ENCODE measurements at regions of chr2 and their contacts with region 1.

Region 1: DNA sequence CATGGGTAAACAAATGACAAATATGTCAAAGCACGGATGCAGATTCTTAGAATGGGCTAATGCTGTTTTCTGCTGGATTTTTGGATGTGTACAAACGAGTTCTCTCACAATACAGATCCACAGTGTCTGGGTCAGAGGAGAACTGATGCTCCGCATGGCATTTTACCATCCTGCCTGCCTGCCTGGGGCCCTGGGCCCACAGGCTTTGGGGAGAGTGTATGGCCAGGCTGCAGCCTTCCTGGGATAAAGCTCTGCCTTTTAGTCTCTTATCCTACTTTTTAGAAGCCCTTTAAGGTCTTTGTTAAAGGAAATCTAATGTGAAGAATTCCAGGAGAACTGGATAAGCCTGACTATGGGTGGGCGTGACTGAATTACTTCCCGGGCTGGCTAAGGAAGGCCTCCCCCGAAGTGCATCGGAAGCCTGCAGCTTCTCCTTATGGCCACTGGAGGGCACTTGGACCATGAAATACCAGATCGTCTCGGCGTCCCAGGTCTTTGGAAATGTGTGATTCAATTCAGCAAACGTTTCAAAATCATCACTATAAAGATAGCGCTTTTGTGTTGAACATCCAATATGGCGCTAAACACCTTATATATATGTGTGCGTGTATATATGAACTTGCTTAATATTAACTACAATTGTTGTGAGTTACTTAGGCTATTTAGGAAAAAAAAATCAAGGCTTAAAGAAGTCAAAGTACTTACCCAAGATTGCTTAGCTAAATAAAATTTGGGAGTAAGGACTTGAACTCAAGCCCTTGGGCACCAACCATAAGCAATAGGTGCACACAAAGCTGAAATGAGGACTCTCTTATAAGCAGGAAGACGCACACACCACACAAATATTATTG is 15.2 kb upstream of the DNPEP start:
- DNase-seq: peak; percentile 18 to 77 (median 62)
- ATAC-seq: peak; percentile 99
- H3K4me3 ChIP-seq: no peak overlapping the region
- H3K4me3 Mint-ChIP-seq: no peak overlapping the region
- H3K27ac ChIP-seq: no peak overlapping the region
- H3K27ac Mint-ChIP-seq: no peak overlapping the region
- H3K4me1 ChIP-seq: peaks cover under 1% of the 10 kb centered on the region
- H3K4me1 Mint-ChIP-seq: peaks cover 4% of the 10 kb centered on the region
- H3K27me3 ChIP-seq: no peaks in the 10 kb centered on the region
- H3K27me3 Mint-ChIP-seq: no peaks in the 10 kb centered on the region
- CTCF ChIP-seq: peak; percentile 80

Region 2: DNA sequence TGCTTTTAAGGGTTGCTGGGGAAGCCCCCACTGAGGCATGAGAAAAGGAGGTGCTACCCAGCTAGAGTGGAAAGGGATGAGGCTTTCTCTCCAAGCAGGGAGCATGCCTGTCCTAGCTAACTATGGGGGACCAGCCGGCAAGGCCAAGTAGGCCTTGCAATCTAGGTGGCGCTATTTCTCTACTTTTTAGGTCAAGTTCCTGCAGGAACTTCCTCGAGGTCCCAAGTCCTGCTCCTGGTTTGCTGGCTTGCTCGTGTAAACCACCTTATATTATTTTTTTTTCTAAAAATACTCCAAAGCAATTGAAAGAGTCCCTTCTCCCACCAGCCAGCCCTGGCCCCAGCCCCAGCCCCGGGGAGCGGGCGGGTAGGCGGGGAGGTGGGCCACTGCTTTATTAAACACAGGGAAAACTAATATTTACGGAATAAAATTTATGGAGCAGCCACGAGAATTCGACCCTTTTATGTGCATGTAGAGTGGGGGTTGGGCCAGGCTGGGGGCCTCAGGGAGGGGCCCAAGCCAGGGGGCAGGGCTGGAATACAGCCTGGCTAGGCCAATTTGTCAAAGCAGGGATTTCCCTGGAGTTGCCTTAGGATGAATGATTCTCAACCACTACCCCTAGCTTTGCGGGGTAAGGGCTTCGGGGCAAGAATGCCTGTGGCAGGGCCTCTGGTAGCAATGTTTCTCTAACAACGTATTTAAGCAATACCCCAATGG is 329.3 kb before region 1 on chr2:
- CTCF ChIA-PET with region 1: no interaction called
- POLR2A ChIA-PET with region 1: no interaction called
- intact Hi-C with region 1: no loop called
- DNase-seq: peak in 3 of 9 experiments; percentile 9 to 49 (median 30)
- ATAC-seq: no peak
- H3K4me3 ChIP-seq: no peak overlapping the region
- H3K4me3 Mint-ChIP-seq: no peak overlapping the region
- H3K27ac ChIP-seq: no peak overlapping the region
- H3K27ac Mint-ChIP-seq: no peak overlapping the region
- H3K4me1 ChIP-seq: no peaks in the 10 kb centered on the region
- H3K4me1 Mint-ChIP-seq: no peaks in the 10 kb centered on the region
- H3K27me3 ChIP-seq: no peaks in the 10 kb centered on the region
- H3K27me3 Mint-ChIP-seq: no peaks in the 10 kb centered on the region
- CTCF ChIP-seq: no peak

Region 3: GRCh38 chr2:219430633-219431615 is 28.0 kb after region 1 on chr2:
- CTCF ChIA-PET with region 1: interaction called, 11 read pairs
- POLR2A ChIA-PET with region 1: no interaction called
- intact Hi-C with region 1: no loop called
- DNase-seq: peak in 2 of 9 experiments; percentile 29 to 47
- ATAC-seq: peak; percentile 57
- H3K4me3 ChIP-seq: no peak overlapping the region
- H3K4me3 Mint-ChIP-seq: no peak overlapping the region
- H3K27ac ChIP-seq: no peak overlapping the region
- H3K27ac Mint-ChIP-seq: no peak overlapping the region
- H3K4me1 ChIP-seq: no peaks in the 10 kb centered on the region
- H3K4me1 Mint-ChIP-seq: peaks cover 6% of the 10 kb centered on the region
- H3K27me3 ChIP-seq: peaks cover 0 to 14% of the 10 kb centered on the region in 2 experiments
- H3K27me3 Mint-ChIP-seq: peaks cover 16% of the 10 kb centered on the region
- CTCF ChIP-seq: peak; percentile 24

Region 4: DNA sequence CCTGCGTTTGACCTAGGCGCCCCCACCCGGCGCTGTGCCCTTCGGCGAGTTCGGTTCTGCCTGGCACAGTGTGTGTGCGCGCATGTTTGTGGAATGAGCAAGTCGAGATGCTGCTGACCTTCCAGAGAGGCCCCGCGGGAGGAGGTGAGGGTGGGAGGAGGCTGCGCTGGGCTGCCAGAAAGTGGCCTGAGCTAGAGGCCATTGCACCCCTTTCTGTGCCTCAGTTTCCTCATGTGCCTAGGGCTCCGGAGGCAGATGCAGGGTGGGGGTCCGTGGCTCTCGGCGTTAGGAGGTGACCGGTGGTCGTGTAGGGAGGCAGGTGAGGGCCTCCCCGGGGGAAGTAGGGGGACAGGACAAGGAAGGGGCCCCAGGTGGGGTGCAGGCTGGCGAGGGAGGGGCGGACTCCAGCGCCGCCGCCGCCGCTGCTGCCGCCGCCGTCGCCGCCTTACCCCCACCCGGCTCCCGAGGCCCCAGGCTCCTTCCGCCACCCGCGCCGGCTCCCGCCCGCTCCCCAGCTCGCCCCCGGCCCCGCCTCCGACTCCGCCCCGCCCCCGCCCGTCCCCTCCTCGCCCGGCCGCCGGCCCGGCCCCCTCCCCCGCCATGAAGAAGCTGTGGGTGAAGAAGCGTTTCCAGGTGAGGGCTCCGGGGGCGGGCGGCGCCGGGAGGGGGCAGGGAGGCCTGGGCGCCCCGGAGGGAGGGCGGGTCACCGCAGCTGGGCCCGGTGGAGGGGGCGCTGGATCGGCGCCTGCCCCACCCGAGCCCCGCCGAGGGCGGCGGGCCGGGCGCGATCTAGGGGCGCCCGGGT is 38.8 kb after region 1 on chr2:
- CTCF ChIA-PET with region 1: interaction called, 8 read pairs
- POLR2A ChIA-PET with region 1: no interaction called
- intact Hi-C with region 1: loop called in 1 of 2 experiments (anchors 5 kb)
- DNase-seq: peak in 8 of 9 experiments; percentile 33 to 76 (median 64)
- ATAC-seq: peak; percentile 80
- H3K4me3 ChIP-seq: peak overlapping the region; percentile 47 to 59
- H3K4me3 Mint-ChIP-seq: peak overlapping the region; percentile 71
- H3K27ac ChIP-seq: no peak overlapping the region
- H3K27ac Mint-ChIP-seq: no peak overlapping the region
- H3K4me1 ChIP-seq: peaks cover 12% of the 10 kb centered on the region
- H3K4me1 Mint-ChIP-seq: peaks cover 19% of the 10 kb centered on the region
- H3K27me3 ChIP-seq: peaks cover 0 to 4% of the 10 kb centered on the region in 2 experiments
- H3K27me3 Mint-ChIP-seq: peaks cover 4% of the 10 kb centered on the region
- CTCF ChIP-seq: no peak

Region 5: DNA sequence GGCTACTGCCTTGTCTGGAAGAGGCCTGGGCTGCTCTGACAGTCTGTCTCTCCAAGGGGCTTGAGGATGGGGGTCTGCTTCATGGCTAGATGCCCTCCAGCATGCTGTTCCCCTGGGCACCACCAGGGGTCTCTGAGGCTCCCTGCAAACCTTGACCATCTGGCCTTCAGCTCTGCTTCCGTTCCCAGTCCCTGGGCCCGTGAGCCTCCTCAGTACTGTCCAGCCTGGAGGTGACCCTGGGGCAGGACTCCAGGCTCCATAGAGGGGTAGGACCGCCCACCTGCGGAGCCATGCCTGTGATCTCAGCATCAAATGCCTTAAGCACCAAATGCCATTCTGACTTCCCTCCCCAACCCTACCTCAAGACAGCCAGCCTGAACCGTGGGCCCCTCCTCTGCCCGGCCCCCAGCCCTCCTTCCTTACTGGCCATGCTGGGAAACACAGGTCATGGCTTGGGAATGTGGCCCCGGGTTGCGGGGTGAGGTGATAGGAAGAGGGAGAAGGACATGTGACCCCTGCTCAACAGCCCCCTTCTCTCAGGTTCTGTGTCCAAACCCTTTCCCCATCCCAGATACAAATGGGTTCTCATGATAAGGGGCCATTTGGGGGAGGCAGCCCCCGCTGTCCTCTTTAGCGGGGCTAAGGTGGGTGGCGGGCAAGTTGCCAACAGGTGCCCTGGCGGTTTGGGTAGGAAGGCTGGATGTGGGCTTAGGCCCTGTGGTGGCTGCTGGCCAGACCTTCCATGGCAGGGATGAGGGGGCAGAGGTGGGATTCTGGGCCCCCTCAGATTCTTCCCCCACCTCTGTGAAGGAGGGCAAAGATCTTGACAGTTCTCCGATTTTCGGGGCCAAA is 56.8 kb after region 1 on chr2:
- CTCF ChIA-PET with region 1: interaction called, 20 read pairs
- POLR2A ChIA-PET with region 1: no interaction called
- intact Hi-C with region 1: loop called (anchors 2 kb)
- DNase-seq: peak in 7 of 9 experiments; percentile 16 to 62 (median 45)
- ATAC-seq: peak; percentile 59
- H3K4me3 ChIP-seq: no peak overlapping the region
- H3K4me3 Mint-ChIP-seq: no peak overlapping the region
- H3K27ac ChIP-seq: no peak overlapping the region
- H3K27ac Mint-ChIP-seq: no peak overlapping the region
- H3K4me1 ChIP-seq: no peaks in the 10 kb centered on the region
- H3K4me1 Mint-ChIP-seq: peaks cover 9% of the 10 kb centered on the region
- H3K27me3 ChIP-seq: no peaks in the 10 kb centered on the region
- H3K27me3 Mint-ChIP-seq: no peaks in the 10 kb centered on the region
- CTCF ChIP-seq: peak; percentile 77

Region 6: GRCh38 chr2:219560037-219560892 is 157.4 kb after region 1 on chr2:
- CTCF ChIA-PET with region 1: interaction called, 11 read pairs
- POLR2A ChIA-PET with region 1: no interaction called
- intact Hi-C with region 1: no loop called
- DNase-seq: peak in 3 of 9 experiments; percentile 40 to 56 (median 45)
- ATAC-seq: peak; percentile 88
- H3K4me3 ChIP-seq: no peak overlapping the region
- H3K4me3 Mint-ChIP-seq: no peak overlapping the region
- H3K27ac ChIP-seq: no peak overlapping the region
- H3K27ac Mint-ChIP-seq: no peak overlapping the region
- H3K4me1 ChIP-seq: no peaks in the 10 kb centered on the region
- H3K4me1 Mint-ChIP-seq: no peaks in the 10 kb centered on the region
- H3K27me3 ChIP-seq: no peaks in the 10 kb centered on the region
- H3K27me3 Mint-ChIP-seq: peaks cover 32% of the 10 kb centered on the region
- CTCF ChIP-seq: peak; percentile 77

Region 7: GRCh38 chr2:219642465-219643080 is 239.7 kb after region 1 on chr2:
- CTCF ChIA-PET with region 1: interaction called, 3 read pairs
- POLR2A ChIA-PET with region 1: no interaction called
- intact Hi-C with region 1: loop called (anchors 1 kb)
- DNase-seq: peak; percentile 76 to 95 (median 89)
- ATAC-seq: peak; percentile 100
- H3K4me3 ChIP-seq: no peak overlapping the region
- H3K4me3 Mint-ChIP-seq: no peak overlapping the region
- H3K27ac ChIP-seq: no peak overlapping the region
- H3K27ac Mint-ChIP-seq: no peak overlapping the region
- H3K4me1 ChIP-seq: no peaks in the 10 kb centered on the region
- H3K4me1 Mint-ChIP-seq: peaks cover 7% of the 10 kb centered on the region
- H3K27me3 ChIP-seq: peaks cover 0 to 1% of the 10 kb centered on the region in 2 experiments
- H3K27me3 Mint-ChIP-seq: peaks cover 33% of the 10 kb centered on the region
- CTCF ChIP-seq: peak; percentile 99